Heart left ventricle (tissue), 16 donors: ENCODE measurements at regions of chr11 and their contacts with region 1.

Region 1: DNA sequence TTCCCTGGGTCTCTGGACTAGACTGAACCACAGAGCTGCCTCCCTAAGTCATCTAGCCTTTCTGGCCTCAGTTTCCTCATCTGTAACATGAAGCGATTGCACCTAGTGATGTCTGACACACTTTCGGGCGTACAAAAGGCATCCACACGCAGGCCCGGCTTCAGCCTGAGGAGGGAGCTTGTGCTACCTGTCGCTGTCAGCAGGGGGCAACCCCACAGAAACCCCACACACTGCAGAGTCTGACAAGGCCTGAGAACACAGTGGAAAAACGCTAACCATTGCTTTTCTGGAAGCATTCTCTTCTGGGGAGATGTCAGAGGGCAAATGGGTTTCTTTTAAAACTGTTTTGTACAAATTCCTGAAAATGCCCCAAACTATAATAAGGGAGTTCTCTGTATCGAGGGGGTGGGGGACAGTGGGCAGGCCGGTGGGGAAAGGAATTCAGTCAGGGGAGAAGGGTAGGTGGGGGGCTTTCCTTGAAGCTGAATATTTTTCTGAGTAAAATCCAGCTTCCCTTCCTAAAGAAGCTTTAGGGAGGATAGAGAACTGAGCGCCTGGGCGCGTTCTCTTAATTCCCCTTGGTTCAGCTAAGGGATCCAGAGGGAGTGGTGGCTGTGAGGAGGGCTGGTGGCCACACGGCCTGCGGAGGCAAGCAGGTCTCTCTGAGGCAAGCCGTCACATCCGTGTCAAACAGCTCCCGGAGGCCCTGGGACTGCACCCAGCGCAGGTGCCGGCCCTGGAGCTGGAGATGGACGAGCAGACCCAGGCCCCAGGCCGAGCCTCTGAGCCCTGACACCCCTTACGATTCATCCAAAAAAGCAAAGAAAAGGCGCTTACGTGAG is 533 bp downstream of the ELF5 start:
- DNase-seq: peak in 1 of 5 donors; percentile 39
- ATAC-seq: peak; percentile 49 to 87 (median 76)
- H3K4me3 ChIP-seq: no peak overlapping the region
- H3K27ac ChIP-seq: no peak overlapping the region
- H3K4me1 ChIP-seq: peaks cover 0 to 16% (median 0%) of the 10 kb centered on the region in 12 donors
- H3K27me3 ChIP-seq: no peaks in the 10 kb centered on the region
- CTCF ChIP-seq: peak; percentile 29 to 70 (median 54)
- POLR2A ChIP-seq: no peak

Region 2: GRCh38 chr11:34344768-34345539 is 168.1 kb before region 1 on chr11:
- intact Hi-C with region 1: no loop called
- DNase-seq: peak in 4 of 5 donors; percentile 28 to 65 (median 44)
- ATAC-seq: peak in 3 of 4 donors; percentile 5 to 32 (median 24)
- H3K4me3 ChIP-seq: no peak overlapping the region
- H3K27ac ChIP-seq: peak overlapping the region in 9 of 12 donors; percentile 77 to 93 (median 84)
- H3K4me1 ChIP-seq: peaks cover 0 to 85% (median 56%) of the 10 kb centered on the region in 12 donors
- H3K27me3 ChIP-seq: no peaks in the 10 kb centered on the region
- CTCF ChIP-seq: no peak
- POLR2A ChIP-seq: no peak

Region 3: DNA sequence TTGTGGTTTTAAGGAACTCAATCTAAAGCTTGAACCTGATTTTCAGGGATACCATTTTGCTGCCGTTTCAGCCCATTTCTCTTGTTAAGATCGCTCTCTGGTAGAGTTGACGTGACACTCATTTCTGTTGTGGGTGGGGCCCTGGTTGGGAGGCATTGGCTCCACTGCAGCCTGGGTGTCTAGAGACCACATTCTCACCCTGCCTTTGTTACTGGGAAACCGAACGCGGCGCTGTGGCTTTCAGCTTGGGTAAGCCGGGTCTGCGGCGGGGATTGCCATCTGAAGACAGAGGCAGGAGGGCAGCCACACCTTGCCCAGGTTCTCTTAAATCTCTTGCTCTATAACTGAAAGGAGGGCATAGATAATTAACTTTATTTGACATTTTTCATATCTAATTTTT is 111.0 kb after region 1 on chr11:
- intact Hi-C with region 1: no loop called
- DNase-seq: no peak
- ATAC-seq: no peak
- H3K4me3 ChIP-seq: no peak overlapping the region
- H3K27ac ChIP-seq: no peak overlapping the region
- H3K4me1 ChIP-seq: no peaks in the 10 kb centered on the region
- H3K27me3 ChIP-seq: peaks cover 0 to 5% (median 0%) of the 10 kb centered on the region in 9 donors
- CTCF ChIP-seq: no peak
- POLR2A ChIP-seq: no peak

Region 4: GRCh38 chr11:34890812-34891211 is 377.8 kb after region 1 on chr11:
- intact Hi-C with region 1: loop called in 4 of 10 experiments (anchors 5 to 10 kb)
- DNase-seq: no peak
- ATAC-seq: peak in 2 of 4 donors; percentile 38 to 39
- H3K4me3 ChIP-seq: no peak overlapping the region
- H3K27ac ChIP-seq: no peak overlapping the region
- H3K4me1 ChIP-seq: no peaks in the 10 kb centered on the region
- H3K27me3 ChIP-seq: no peaks in the 10 kb centered on the region
- CTCF ChIP-seq: peak; percentile 14 to 68 (median 40)
- POLR2A ChIP-seq: no peak

Region 5: DNA sequence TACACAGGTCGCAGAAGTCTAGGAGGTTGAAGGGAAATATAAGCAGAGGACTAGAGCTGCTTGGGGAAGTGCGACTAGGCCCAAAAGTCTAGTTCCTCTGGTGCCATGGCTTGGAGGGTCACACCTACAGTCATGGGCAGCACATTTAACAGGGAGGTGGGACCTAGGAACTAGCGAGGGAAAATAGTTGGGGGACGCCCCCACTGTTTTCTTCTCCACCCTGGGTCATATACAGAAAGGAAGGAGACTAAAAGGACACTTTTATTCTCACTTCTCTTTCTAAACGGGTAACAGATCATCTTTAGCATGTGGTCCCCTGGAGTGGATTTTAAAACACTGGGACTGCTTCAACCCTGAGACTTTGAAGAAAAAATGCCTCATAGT is 386.6 kb after region 1 on chr11:
- intact Hi-C with region 1: loop called in 5 of 10 experiments (anchors 5 to 10 kb)
- DNase-seq: no peak
- ATAC-seq: no peak
- H3K4me3 ChIP-seq: no peak overlapping the region
- H3K27ac ChIP-seq: no peak overlapping the region
- H3K4me1 ChIP-seq: no peaks in the 10 kb centered on the region
- H3K27me3 ChIP-seq: no peaks in the 10 kb centered on the region
- CTCF ChIP-seq: no peak
- POLR2A ChIP-seq: no peak

Region 6: GRCh38 chr11:34977089-34977906 is 464.2 kb after region 1 on chr11:
- intact Hi-C with region 1: no loop called
- DNase-seq: no peak
- ATAC-seq: peak in 1 of 4 donors; percentile 34
- H3K4me3 ChIP-seq: no peak overlapping the region
- H3K27ac ChIP-seq: peak overlapping the region in 1 of 12 donors; percentile 2
- H3K4me1 ChIP-seq: peaks cover 0 to 20% (median 5%) of the 10 kb centered on the region in 12 donors
- H3K27me3 ChIP-seq: no peaks in the 10 kb centered on the region
- CTCF ChIP-seq: no peak
- POLR2A ChIP-seq: no peak

Region 7: GRCh38 chr11:35412285-35412684 is 899.2 kb after region 1 on chr11:
- intact Hi-C with region 1: loop called in 1 of 10 experiments (anchors 10 kb)
- DNase-seq: no peak
- ATAC-seq: no peak
- H3K4me3 ChIP-seq: no peak overlapping the region
- H3K27ac ChIP-seq: no peak overlapping the region
- H3K4me1 ChIP-seq: peaks cover 0 to 5% (median 0%) of the 10 kb centered on the region in 12 donors
- H3K27me3 ChIP-seq: peaks cover 0 to 35% (median 0%) of the 10 kb centered on the region in 9 donors
- CTCF ChIP-seq: peak in 9 of 12 donors; percentile 20 to 48 (median 27)
- POLR2A ChIP-seq: no peak